MCF 10A (cell line): ENCODE measurements at regions of chr6 and their contacts with region 1.

Region 1: GRCh38 chr6:43723737-43724295 is 36.2 kb upstream of the MRPS18A start:
- DNase-seq: peak; percentile 90
- H3K4me3 Mint-ChIP-seq: no peak overlapping the region
- H3K27ac Mint-ChIP-seq: no peak overlapping the region
- H3K4me1 Mint-ChIP-seq: peaks cover 31% of the 10 kb centered on the region
- H3K27me3 Mint-ChIP-seq: peaks cover 14% of the 10 kb centered on the region
- CTCF ChIP-seq: peak; percentile 66

Region 2: GRCh38 chr6:42142118-42142931 is 1581.5 kb before region 1 on chr6 and contains the start of gene C6orf132:
- CTCF ChIA-PET with region 1: no interaction called
- POLR2A ChIA-PET with region 1: no interaction called
- intact Hi-C with region 1: no loop called
- DNase-seq: peak; percentile 63
- H3K4me3 Mint-ChIP-seq: peak within 1 kb of the TSS; percentile 66
- H3K27ac Mint-ChIP-seq: peak within 1 kb of the TSS; percentile 55
- H3K4me1 Mint-ChIP-seq: peaks cover 22% of the 10 kb centered on the region
- H3K27me3 Mint-ChIP-seq: no peaks in the 10 kb centered on the region
- CTCF ChIP-seq: no peak
- total RNA-seq, gene C6orf132: 19.5 and 31.9 TPM in 2 replicates

Region 3: GRCh38 chr6:43541774-43542471 is 181.9 kb before region 1 on chr6:
- CTCF ChIA-PET with region 1: no interaction called
- POLR2A ChIA-PET with region 1: no interaction called
- intact Hi-C with region 1: no loop called
- DNase-seq: no peak
- H3K4me3 Mint-ChIP-seq: no peak overlapping the region
- H3K27ac Mint-ChIP-seq: no peak overlapping the region
- H3K4me1 Mint-ChIP-seq: peaks cover 9% of the 10 kb centered on the region
- H3K27me3 Mint-ChIP-seq: no peaks in the 10 kb centered on the region
- CTCF ChIP-seq: no peak

Region 4: DNA sequence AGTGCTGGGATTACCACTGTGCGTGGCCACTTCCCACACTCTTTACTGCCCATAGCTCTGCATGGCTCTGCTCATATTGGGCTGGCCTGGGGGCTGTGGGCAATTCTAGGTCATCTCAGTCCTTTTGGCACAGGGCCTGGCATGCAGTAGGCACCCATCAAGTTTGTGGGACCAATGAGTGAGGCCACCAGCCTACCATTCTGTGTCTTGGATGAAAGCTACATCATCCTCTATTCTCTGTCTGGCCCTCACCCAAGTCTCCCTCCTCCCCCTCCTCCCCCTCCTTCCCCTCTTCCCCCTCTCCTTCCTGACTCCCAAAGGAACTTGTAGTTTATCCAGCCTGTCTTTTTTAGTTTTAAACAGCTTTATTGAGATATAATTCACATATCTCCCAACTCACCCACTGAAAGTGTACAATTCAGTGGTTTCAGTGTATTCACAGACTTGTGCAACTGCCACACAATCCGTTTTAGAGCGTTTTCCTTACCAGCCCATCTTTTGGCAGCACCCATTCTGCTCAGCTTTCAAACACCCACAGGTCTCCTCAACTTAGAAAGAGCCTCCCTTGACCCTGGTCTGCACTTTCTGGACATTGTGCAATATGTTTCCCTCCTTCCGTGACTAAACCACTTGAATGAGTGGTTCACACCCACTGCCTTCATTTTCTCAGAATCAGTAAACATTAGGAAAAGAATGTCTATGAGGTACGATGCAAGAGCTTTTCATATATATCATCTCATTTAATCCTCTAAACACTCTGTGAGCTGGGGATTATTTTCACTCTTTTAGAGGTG is 14.8 kb before region 1 on chr6:
- CTCF ChIA-PET with region 1: interaction called, 10 read pairs
- POLR2A ChIA-PET with region 1: interaction called, 12 read pairs
- intact Hi-C with region 1: no loop called
- DNase-seq: peak; percentile 88
- H3K4me3 Mint-ChIP-seq: peak overlapping the region; percentile 16
- H3K27ac Mint-ChIP-seq: peak overlapping the region; percentile 82
- H3K4me1 Mint-ChIP-seq: peaks cover 13% of the 10 kb centered on the region
- H3K27me3 Mint-ChIP-seq: peaks cover 20% of the 10 kb centered on the region
- CTCF ChIP-seq: no peak

Region 5: DNA sequence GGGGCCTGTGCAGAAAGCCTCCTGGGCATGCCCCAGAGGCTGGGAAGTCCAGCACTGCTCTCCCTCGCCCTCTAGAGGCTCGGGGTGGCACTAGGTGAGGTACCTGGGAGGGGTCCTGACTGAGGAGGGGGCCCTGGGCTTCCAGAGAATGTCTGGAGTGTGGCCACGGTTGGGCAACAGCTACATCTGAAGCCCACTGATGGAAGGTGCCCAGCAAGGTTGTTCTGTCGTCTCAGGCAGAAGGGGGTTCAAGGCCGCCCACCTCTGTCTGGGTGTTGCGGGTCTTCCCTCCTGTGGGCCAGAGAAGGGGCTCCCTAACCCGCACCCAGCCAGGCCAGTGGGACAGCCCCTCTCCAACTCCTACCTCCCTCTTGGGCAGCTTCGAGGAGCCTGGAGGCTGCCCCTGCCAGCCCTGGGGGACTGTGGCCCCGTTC is 34.8 kb after region 1 on chr6:
- CTCF ChIA-PET with region 1: interaction called, 5 read pairs
- POLR2A ChIA-PET with region 1: interaction called, 9 read pairs
- intact Hi-C with region 1: loop called (anchors 1 kb)
- DNase-seq: no peak
- H3K4me3 Mint-ChIP-seq: no peak overlapping the region
- H3K27ac Mint-ChIP-seq: peak overlapping the region; percentile 17
- H3K4me1 Mint-ChIP-seq: peaks cover 11% of the 10 kb centered on the region
- H3K27me3 Mint-ChIP-seq: peaks cover 14% of the 10 kb centered on the region
- CTCF ChIP-seq: peak; percentile 57

Region 6: GRCh38 chr6:44010411-44011349 is 286.9 kb after region 1 on chr6:
- CTCF ChIA-PET with region 1: no interaction called
- POLR2A ChIA-PET with region 1: no interaction called
- intact Hi-C with region 1: loop called (anchors 1 kb)
- DNase-seq: peak; percentile 91
- H3K4me3 Mint-ChIP-seq: peak overlapping the region; percentile 25
- H3K27ac Mint-ChIP-seq: peak overlapping the region; percentile 79
- H3K4me1 Mint-ChIP-seq: peaks cover 39% of the 10 kb centered on the region
- H3K27me3 Mint-ChIP-seq: no peaks in the 10 kb centered on the region
- CTCF ChIP-seq: no peak